Activated CD8-positive, alpha-beta T cell treated with anti-CD3 and anti-CD28 coated beads for 36 hours (primary cell): ENCODE measurements at regions of chr22 and their contacts with region 1.

Region 1: GRCh38 chr22:19854778-19855503 is at the starts of genes GNB1L and RTL10:
- DNase-seq: peak; percentile 96
- ATAC-seq: peak; percentile 92
- H3K4me3 Mint-ChIP-seq: peak within 1 kb of the TSS; percentile 96
- H3K27ac Mint-ChIP-seq: peak within 1 kb of the TSS; percentile 98
- H3K4me1 Mint-ChIP-seq: peaks cover 59% of the 10 kb centered on the region
- H3K27me3 Mint-ChIP-seq: no peaks in the 10 kb centered on the region
- CTCF ChIP-seq: no peak
- total RNA-seq, gene GNB1L: 16.2 to 17.4 TPM
- total RNA-seq, gene RTL10: 14.7 to 17.4 TPM

Region 2: DNA sequence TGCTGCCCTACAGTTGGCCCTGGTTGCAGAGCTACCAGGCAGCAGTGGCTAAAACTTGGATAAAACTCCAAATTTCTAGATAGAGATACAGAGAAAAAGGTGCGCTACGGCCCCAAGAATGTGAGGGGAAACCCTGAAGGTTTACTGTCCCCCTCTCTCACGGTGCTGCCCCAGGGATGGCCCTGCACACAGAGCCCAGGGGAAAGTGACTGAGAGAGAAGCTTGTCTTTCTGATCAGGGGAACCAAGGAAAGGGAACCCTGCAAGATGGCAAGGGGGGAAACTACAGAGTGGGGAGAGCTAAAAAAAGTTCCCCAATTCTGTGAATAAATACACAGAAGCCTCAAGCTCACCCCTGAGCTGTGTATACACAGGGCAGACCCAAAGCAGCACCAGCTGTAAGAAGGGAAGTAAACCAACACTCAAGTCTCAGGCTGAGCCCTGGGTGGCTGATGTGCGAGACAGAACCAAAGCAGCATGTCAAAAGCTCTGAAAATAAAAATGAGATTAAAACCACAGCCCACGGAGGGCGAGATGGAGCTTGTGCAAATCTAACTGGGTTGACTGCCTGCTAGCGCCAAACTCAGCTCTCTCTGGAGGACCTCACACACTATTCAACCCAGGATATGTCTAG is 22.3 kb before region 1 on chr22:
- CTCF ChIA-PET with region 1: no interaction called
- POLR2A ChIA-PET with region 1: no interaction called
- intact Hi-C with region 1: no loop called
- DNase-seq: no peak
- ATAC-seq: no peak
- H3K4me3 Mint-ChIP-seq: no peak overlapping the region
- H3K27ac Mint-ChIP-seq: no peak overlapping the region
- H3K4me1 Mint-ChIP-seq: peaks cover 24% of the 10 kb centered on the region
- H3K27me3 Mint-ChIP-seq: no peaks in the 10 kb centered on the region
- CTCF ChIP-seq: no peak

Region 3: DNA sequence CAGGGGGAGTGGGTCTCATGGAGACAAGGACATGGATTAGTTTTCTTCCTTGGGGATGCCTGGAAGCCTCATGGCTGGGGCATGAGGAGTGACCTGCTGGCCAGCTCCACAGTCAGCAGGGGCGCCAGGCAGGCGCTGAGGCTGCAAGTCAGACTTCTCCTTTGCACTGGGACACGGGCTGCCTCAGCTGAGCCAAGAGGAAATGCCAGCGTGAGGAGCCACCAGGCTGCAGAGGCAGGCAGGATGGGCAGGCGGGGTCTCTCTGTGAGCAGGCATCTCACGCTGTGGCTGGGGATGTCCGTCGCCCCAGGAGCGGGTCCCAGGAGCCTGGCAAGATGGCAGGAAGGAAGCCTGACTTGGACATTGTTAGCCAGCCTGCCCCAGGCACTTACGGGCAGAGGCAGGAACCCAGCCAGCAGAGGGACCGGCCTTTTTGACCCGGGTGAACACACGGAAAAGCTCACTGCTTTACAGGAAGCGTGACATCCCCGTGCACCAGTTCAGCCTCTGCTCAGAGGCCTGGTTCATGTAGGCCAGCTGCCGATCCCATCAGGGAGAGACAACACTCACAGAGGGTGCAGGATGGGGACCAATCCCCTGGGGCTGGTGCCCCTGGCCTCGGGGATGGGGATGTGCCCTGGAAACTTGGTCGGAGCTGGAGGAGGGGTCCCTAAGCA is 10.4 kb before region 1 on chr22:
- CTCF ChIA-PET with region 1: interaction called, 3 read pairs
- POLR2A ChIA-PET with region 1: interaction called, 26 read pairs
- intact Hi-C with region 1: no loop called
- DNase-seq: peak; percentile 45
- ATAC-seq: peak; percentile 65
- H3K4me3 Mint-ChIP-seq: peak overlapping the region; percentile 26
- H3K27ac Mint-ChIP-seq: peak overlapping the region; percentile 81
- H3K4me1 Mint-ChIP-seq: peaks cover 35% of the 10 kb centered on the region
- H3K27me3 Mint-ChIP-seq: no peaks in the 10 kb centered on the region
- CTCF ChIP-seq: no peak

Region 4: DNA sequence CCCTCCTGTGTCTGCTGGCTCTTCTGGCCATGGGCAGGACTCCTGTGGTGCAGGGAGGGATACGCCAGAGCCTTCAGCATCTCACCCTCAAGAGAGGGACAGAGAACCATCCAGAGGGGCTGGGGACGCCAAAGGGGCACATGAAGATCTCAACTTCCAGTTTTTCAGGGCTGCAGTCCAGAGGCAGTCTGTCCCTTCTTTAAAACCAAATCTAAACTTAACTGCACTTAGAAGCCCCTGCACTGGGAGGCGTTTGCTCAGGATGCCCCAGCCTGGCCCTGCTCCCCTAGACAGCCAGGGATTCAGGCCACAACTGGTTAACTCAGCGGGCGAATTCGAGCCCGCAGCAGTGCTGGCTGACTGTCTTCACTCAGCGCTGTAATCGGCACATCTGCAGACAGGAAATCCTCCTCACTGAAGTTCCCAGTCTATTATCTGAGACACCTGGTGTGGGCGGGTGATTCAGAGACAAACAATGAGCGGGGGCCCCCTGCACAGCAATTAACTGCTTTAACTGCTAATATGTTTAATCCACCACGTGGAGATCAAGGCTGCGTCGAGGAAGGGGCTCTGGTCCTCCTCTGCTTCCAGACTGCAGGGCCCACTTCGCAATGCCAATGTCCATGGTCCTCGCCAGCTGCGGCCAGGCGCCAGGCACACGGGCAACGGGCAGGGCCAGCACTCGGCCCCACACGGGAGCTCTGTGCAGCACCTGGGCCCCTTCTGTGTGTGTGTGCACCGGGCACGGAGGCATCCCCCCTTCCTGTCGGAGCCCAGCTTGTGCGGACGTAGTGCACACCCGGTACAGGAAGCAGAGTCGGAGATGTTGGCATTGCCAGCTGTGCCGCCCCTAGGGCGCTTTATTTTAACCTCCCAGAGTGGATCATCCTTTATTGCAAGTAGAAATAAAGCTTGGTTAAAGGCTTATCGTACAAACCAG is 36.6 kb after region 1 on chr22:
- CTCF ChIA-PET with region 1: interaction called, 7 read pairs
- POLR2A ChIA-PET with region 1: interaction called, 96 read pairs
- intact Hi-C with region 1: loop called (anchors 5 kb)
- DNase-seq: peak; percentile 96
- ATAC-seq: peak; percentile 74
- H3K4me3 Mint-ChIP-seq: peak overlapping the region; percentile 73
- H3K27ac Mint-ChIP-seq: peak overlapping the region; percentile 97
- H3K4me1 Mint-ChIP-seq: peaks cover 81% of the 10 kb centered on the region
- H3K27me3 Mint-ChIP-seq: no peaks in the 10 kb centered on the region
- CTCF ChIP-seq: no peak